ENCODE measurements at regions of chr3 and their contacts with region 1.

Region 1: GRCh38 chr3:110851736-110852135 is 219.9 kb upstream of the NECTIN3 start:
- DNase-seq: no peak
- ATAC-seq: no peak
- H3K4me3 ChIP-seq: no peak overlapping the region
- H3K4me3 Mint-ChIP-seq: no peak overlapping the region
- H3K27ac ChIP-seq: no peak overlapping the region
- H3K27ac Mint-ChIP-seq: no peak overlapping the region
- H3K4me1 ChIP-seq: no peaks in the 10 kb centered on the region
- H3K4me1 Mint-ChIP-seq: no peaks in the 10 kb centered on the region
- H3K27me3 ChIP-seq: no peaks in the 10 kb centered on the region
- H3K27me3 Mint-ChIP-seq: no peaks in the 10 kb centered on the region
- CTCF ChIP-seq: no peak

Region 2: DNA sequence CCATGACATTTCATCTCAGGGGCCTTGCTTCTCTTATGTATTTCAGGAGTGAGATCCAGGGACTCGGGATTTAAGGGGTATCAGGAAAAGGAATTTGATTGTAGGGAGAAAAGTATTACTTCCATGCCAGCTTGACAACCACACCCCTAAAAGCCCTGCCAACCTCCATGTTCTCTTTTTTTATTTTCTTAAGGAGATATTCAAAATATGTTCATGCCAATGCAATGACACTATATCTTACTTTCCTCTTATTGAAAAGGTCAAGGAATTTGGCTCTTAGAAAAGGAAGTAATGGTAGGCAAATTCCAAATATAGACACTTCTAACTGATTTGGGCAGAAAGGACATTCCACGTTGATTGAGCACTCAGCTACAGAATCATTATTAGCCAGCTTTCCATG is 187.6 kb before region 1 on chr3:
- CTCF ChIA-PET with region 1: no interaction called
- POLR2A ChIA-PET with region 1: no interaction called
- intact Hi-C with region 1: loop called in 1 of 2 experiments (anchors 5 kb)
- DNase-seq: no peak
- ATAC-seq: no peak
- H3K4me3 ChIP-seq: no peak overlapping the region
- H3K4me3 Mint-ChIP-seq: no peak overlapping the region
- H3K27ac ChIP-seq: no peak overlapping the region
- H3K27ac Mint-ChIP-seq: no peak overlapping the region
- H3K4me1 ChIP-seq: no peaks in the 10 kb centered on the region
- H3K4me1 Mint-ChIP-seq: no peaks in the 10 kb centered on the region
- H3K27me3 ChIP-seq: no peaks in the 10 kb centered on the region
- H3K27me3 Mint-ChIP-seq: no peaks in the 10 kb centered on the region
- CTCF ChIP-seq: no peak

Measured in CD4-positive, alpha-beta T cell (primary cell).